Lower leg skin (tissue), 4 donors: ENCODE measurements at regions of chr9 and their contacts with region 1.

Region 1: DNA sequence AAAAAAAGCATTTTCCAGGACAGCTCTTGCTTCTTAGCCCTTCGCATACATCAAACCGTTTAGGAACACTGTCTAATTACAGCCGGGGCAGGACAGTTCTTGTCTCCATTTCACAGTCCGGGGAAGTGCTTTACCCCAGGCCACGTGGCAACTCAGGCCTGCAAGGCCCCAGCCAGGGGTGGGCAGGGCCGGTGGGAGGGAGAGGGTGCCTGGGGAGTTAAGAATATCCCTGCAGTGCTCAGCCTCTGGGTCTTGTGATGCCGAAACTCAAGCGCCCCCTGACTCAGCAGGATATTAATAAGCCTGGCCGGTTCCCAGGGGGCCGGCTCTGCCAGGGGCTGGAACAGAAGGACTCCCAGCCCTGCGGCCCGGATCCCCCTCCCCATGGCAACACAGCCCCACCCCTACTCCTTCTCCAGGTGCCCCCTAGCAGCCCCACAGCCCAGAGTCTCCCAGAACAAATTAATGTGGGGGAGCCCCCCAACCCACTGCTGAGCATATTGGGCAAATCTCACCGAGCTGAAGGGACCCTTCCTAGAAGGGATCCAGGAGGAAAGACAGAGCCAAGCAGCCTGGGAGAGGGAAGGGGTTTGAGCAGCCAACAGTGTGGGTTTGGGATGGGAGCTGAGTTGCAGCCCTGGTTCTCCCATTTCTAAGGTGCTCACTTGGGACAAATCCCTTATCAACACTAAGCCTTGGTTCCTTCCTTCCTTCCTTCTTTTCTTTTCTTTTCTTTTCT is 45.3 kb downstream of the PLPP7 start:
- DNase-seq: no peak
- H3K4me3 ChIP-seq: no peak overlapping the region
- CTCF ChIP-seq: no peak
- POLR2A ChIP-seq: no peak

Region 2: DNA sequence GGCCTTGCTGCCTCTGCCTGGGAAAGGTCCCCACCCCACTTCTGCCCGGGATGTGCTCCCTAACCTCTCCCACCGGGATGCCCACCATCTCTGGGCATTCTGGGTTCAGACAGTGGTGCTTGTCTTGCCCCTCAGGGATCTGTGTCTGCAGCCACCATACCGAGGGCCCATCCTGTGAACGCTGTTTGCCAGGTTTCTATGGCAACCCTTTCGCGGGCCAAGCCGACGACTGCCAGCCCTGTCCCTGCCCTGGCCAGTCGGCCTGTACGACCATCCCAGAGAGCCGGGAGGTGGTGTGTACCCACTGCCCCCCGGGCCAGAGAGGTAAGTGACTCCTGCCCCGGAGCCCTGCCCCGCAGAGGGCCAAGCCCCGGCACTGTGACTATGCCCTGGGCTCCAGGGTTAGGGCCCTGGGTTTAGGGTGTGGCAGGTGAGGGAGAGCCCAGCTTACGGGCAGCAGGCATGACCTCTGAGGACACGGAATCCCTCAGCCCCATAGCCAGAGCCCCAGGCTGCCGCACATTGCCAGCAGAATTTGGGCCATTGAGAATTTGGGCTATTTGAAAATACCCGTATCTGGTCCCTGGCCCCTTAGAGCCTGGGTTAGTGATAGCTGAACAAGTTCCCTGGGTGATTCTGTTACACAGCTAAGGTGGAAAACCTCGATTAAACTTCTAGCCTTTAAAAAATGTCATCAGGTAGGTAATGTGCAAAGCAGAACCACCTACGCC is 273.7 kb before region 1 on chr9:
- intact Hi-C with region 1: loop called (anchors 5 kb)
- DNase-seq: no peak
- H3K4me3 ChIP-seq: no peak overlapping the region
- CTCF ChIP-seq: no peak
- POLR2A ChIP-seq: no peak

Region 3: GRCh38 chr9:131178382-131178781 is 156.4 kb before region 1 on chr9:
- intact Hi-C with region 1: loop called (anchors 10 kb)
- DNase-seq: peak in 1 of 2 donors; percentile 41
- H3K4me3 ChIP-seq: no peak overlapping the region
- CTCF ChIP-seq: no peak
- POLR2A ChIP-seq: no peak

Region 4: DNA sequence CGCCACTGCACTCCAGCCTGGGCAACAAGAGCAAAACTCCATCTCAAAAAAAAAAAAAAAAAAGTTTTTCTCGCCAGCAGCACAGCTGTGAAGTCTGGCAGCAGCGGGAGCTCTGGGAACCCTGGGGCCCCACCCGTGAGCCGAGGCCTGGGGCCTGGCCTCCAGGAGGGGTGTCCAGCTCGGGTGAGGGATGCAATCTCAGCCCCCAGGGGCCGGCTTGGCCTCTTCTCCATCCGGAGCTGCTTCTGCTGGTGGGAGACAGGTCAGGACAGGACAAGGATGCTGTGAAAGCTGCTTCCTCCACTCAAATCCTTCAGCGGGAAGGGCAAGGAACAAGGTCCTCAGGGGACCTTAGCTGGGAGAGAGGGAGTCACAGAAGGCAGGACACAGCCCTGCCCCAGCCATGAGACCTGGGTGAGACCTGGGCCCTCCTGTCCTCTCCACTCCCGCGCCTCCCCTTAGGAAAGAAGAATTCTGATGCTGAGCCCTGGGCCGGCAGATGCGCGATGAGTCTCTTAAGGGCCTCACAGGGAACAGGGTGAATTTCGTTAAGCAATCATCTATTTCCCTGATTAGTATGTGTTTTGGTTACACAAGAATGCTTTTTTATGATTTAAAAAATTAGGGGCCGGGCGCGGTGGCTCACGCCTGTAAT is 14.6 kb before region 1 on chr9:
- intact Hi-C with region 1: no loop called
- DNase-seq: no peak
- H3K4me3 ChIP-seq: no peak overlapping the region
- CTCF ChIP-seq: no peak
- POLR2A ChIP-seq: no peak